Calu3 (cell line): ENCODE measurements at regions of chr5 and their contacts with region 1.

Region 1: GRCh38 chr5:62354028-62354874 is 48.2 kb downstream of the KIF2A start:
- DNase-seq: peak; percentile 45
- H3K4me3 Mint-ChIP-seq: no peak overlapping the region
- H3K27ac Mint-ChIP-seq: no peak overlapping the region
- H3K4me1 Mint-ChIP-seq: no peaks in the 10 kb centered on the region
- H3K27me3 Mint-ChIP-seq: no peaks in the 10 kb centered on the region
- CTCF ChIP-seq: no peak

Region 2: DNA sequence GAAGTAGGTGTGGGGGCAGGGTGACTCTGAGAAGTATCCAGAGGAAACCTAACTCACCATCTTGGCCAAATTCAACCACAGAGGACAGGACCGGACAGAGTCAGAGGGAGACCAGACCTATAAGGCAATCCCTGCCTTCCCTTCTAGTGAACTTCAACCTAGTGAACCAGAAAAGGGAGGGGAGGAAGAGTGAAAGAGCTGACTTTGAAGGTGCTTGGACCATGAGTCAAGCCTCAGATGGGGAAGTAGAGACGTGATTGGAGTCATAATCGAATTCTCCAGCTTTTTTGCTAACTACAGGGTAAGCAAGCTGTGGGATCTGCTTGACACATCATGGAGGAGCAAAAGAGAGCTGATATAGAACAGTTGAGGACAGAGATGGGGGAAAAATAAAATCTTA is 67.0 kb before region 1 on chr5:
- CTCF ChIA-PET with region 1: interaction called, 12 read pairs
- intact Hi-C with region 1: no loop called
- DNase-seq: no peak
- H3K4me3 Mint-ChIP-seq: no peak overlapping the region
- H3K27ac Mint-ChIP-seq: no peak overlapping the region
- H3K4me1 Mint-ChIP-seq: peaks cover 36% of the 10 kb centered on the region
- H3K27me3 Mint-ChIP-seq: no peaks in the 10 kb centered on the region
- CTCF ChIP-seq: no peak

Region 3: DNA sequence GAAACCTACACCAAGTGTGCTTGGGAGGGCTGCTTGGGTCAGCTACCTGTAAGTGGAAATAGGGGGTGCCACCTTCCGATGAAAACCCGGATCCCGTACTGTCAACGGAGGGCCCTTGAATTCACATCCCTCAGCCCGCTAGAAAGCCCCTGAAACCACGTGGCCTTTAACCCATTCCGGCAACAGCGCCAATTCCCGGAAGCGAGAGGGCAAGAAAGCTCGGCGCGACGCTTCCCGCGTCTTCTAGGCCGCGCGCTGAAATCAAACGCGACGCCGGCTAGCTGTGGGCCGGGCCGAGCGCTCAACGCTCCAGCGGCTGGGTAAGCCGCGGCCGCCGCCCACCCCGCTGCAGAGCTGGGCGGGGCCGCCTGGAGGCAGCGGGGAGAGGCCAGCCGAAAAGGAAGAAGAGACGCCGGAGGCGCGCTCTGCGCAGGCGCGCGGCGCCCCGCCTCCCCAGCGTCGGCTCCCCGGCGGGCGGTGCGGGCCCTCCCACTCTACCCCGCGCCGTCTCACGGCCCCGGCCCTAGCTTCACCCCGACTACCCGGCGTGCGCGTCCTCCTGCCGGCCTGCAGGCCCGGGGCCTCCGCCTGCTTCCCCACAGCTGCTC is 48.4 kb before region 1 on chr5 and contains the start of gene KIF2A:
- CTCF ChIA-PET with region 1: no interaction called
- intact Hi-C with region 1: loop called (anchors 2 kb)
- DNase-seq: peak; percentile 93
- H3K4me3 Mint-ChIP-seq: peak within 1 kb of the TSS; percentile 87
- H3K27ac Mint-ChIP-seq: peak within 1 kb of the TSS; percentile 66
- H3K4me1 Mint-ChIP-seq: peaks cover 22% of the 10 kb centered on the region
- H3K27me3 Mint-ChIP-seq: no peaks in the 10 kb centered on the region
- CTCF ChIP-seq: no peak
- total RNA-seq, gene KIF2A: 76.9 and 81.4 TPM in 2 replicates

Region 4: DNA sequence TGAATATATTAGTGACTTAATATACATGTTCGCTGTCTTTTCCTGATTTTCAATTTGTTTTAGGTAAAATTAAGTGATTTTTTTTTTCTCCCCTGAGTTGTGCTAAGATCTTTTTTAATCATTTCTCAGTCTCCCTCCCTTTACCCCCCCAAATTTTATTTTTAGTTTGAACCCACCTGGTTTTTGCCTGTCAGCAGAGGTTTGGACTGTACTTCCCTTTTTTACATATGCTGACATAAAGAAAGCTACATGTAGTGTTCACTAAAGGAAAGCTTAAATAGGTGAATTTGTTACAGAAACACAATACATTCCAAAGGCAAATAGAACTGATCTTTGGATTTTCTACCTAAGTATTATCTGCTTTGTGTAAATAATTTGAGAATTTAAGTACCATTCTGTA is 140.5 kb after region 1 on chr5:
- CTCF ChIA-PET with region 1: no interaction called
- intact Hi-C with region 1: no loop called
- DNase-seq: no peak
- H3K4me3 Mint-ChIP-seq: no peak overlapping the region
- H3K27ac Mint-ChIP-seq: no peak overlapping the region
- H3K4me1 Mint-ChIP-seq: no peaks in the 10 kb centered on the region
- H3K27me3 Mint-ChIP-seq: no peaks in the 10 kb centered on the region
- CTCF ChIP-seq: no peak

Region 5: GRCh38 chr5:62762503-62762902 is 408.3 kb after region 1 on chr5:
- CTCF ChIA-PET with region 1: no interaction called
- intact Hi-C with region 1: no loop called
- DNase-seq: no peak
- H3K4me3 Mint-ChIP-seq: no peak overlapping the region
- H3K27ac Mint-ChIP-seq: no peak overlapping the region
- H3K4me1 Mint-ChIP-seq: no peaks in the 10 kb centered on the region
- H3K27me3 Mint-ChIP-seq: peaks cover 26% of the 10 kb centered on the region
- CTCF ChIP-seq: no peak